ENCODE measurements at regions of chr12 and their contacts with region 1.

Region 1: DNA sequence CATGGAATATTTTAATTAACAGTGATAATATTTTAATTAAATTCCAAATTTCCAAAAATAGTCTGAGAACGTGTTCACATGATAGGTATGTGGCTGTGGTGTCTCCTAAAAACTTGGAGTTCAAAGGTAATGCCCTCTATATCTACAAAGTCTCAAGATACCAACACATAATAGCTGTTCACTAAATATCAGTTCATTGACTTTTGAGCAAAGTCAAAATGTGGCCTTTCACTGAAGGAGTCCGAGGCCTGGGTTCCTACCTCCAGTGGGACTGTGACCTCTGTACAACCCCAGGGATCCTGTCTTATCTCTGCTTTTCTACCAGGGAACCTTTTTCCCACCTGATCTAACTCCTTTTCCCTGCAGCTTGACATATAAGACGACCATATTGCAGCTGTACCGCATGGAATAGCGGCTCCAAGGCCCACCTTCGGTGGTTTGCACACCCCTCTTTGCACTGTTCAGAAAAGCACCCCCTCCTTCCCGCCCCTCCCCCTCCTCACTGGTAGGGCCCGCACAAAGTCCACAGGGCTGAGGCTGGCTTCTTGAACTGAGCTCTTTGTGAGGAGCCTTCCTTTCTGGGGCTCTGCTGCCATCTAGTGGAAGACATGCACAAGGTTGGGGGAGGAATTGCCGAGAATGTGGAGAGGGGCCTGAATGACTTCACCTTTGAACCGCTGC is 3.1 kb downstream of the CCND2 start:
- DNase-seq: peak; percentile 92

Region 2: GRCh38 chr12:3885277-3886094 is 391.2 kb before region 1 on chr12:
- intact Hi-C with region 1: loop called (anchors 5 to 10 kb)
- DNase-seq: no peak

Region 3: DNA sequence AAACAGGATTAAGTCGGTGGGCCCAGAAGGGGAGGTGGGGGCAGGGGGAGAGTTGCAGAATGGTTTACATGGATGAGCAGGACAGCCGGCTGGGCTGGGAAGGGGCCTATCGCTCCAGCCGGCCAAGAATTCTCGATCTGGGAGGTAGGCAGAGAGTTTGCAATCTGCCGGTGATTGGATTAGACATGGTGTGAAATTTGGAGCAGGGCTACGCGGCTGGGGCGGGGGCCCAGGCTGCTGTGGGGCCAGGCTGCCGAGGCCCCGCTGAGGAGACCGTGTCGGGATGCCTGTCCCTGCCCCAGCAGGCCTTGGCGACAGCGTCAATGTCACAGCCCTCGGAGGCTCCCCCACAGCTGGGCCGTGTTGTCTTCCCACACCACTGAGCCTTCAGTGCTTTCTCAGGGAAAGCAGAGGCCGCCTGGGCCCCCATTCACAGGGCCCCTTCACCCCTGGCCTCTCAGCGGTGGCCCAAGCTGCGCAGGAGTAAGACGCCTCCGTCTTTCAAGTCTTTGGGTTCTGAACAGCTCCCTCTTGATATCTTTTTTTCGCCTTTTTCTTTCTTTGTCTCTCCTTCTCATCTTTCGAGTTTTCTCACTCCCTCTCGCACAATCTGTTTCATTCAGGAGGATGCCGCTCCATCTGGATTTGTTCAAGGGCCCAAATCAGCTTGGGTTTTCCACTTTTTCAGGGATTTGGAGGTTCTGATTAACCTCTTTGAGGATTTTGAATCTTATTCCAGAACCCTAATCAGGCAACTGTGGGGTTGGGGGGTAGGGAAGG is 286.0 kb before region 1 on chr12:
- intact Hi-C with region 1: loop called in 1 of 2 experiments (anchors 5 kb)
- DNase-seq: no peak

Region 4: GRCh38 chr12:4006743-4007142 is 269.9 kb before region 1 on chr12:
- intact Hi-C with region 1: loop called in 1 of 2 experiments (anchors 10 kb)
- DNase-seq: peak; percentile 31

Region 5: GRCh38 chr12:4030929-4031702 is 245.5 kb before region 1 on chr12:
- intact Hi-C with region 1: loop called (anchors 5 to 10 kb)
- DNase-seq: peak; percentile 97

Region 6: GRCh38 chr12:4107436-4107878 is 169.2 kb before region 1 on chr12:
- intact Hi-C with region 1: loop called in 1 of 2 experiments (anchors 10 kb)
- DNase-seq: no peak

Measured in posterior vena cava (tissue), 2 donors.